PC-9 (cell line): ENCODE measurements at regions of chr9 and their contacts with region 1.

Region 1: GRCh38 chr9:72577212-72577753 is 55.9 kb downstream of the TMC1 start:
- DNase-seq: peak; percentile 59 to 95
- H3K4me3 ChIP-seq: peak overlapping the region; percentile 43; the same call in 1 of the 2 replicates
- H3K27ac ChIP-seq: peak overlapping the region; percentile 95
- H3K4me1 ChIP-seq: peaks cover 89% of the 10 kb centered on the region
- H3K27me3 ChIP-seq: no peaks in the 10 kb centered on the region
- CTCF ChIP-seq: no peak

Region 2: GRCh38 chr9:72292256-72292682 is 285.0 kb before region 1 on chr9:
- CTCF ChIA-PET with region 1: no interaction called
- POLR2A ChIA-PET with region 1: interaction called, 5 read pairs
- intact Hi-C with region 1: loop called (anchors 5 kb)
- DNase-seq: no peak
- H3K4me3 ChIP-seq: no peak overlapping the region
- H3K27ac ChIP-seq: no peak overlapping the region
- H3K4me1 ChIP-seq: peaks cover 26% of the 10 kb centered on the region
- H3K27me3 ChIP-seq: no peaks in the 10 kb centered on the region
- CTCF ChIP-seq: peak; percentile 71

Region 3: DNA sequence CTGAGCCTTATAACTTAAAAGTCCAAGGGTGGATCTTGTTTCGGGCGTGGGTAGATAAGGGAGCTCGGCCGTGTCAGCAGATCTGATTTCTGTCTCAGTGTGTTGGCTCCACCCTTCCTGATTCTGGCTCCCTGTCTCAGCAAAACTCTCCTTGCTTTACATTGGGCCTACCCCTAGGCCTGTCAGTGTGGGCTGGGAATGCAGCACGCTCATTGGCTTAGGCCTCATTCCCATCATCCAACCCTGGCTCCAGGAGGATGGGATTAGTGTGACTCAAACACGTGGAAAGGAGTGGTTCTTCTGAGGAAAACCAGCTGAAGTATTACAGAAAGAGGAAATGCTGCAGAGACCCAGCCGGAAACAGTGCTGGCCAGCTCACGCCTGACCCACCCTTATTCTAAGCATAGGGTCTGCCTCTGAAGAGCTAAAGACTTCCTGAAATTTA is 272.2 kb before region 1 on chr9:
- CTCF ChIA-PET with region 1: no interaction called
- POLR2A ChIA-PET with region 1: interaction called, 16 read pairs
- intact Hi-C with region 1: no loop called
- DNase-seq: peak; percentile 88 to 91
- H3K4me3 ChIP-seq: peak overlapping the region; percentile 25; the same call in 1 of the 2 replicates
- H3K27ac ChIP-seq: no peak overlapping the region
- H3K4me1 ChIP-seq: no peaks in the 10 kb centered on the region
- H3K27me3 ChIP-seq: no peaks in the 10 kb centered on the region
- CTCF ChIP-seq: no peak

Region 4: GRCh38 chr9:72473474-72474261 is 103.6 kb before region 1 on chr9:
- CTCF ChIA-PET with region 1: no interaction called
- POLR2A ChIA-PET with region 1: interaction called, 4 read pairs
- intact Hi-C with region 1: loop called (anchors 5 kb)
- DNase-seq: no peak
- H3K4me3 ChIP-seq: no peak overlapping the region
- H3K27ac ChIP-seq: no peak overlapping the region
- H3K4me1 ChIP-seq: peaks cover 31% of the 10 kb centered on the region
- H3K27me3 ChIP-seq: no peaks in the 10 kb centered on the region
- CTCF ChIP-seq: no peak

Region 5: DNA sequence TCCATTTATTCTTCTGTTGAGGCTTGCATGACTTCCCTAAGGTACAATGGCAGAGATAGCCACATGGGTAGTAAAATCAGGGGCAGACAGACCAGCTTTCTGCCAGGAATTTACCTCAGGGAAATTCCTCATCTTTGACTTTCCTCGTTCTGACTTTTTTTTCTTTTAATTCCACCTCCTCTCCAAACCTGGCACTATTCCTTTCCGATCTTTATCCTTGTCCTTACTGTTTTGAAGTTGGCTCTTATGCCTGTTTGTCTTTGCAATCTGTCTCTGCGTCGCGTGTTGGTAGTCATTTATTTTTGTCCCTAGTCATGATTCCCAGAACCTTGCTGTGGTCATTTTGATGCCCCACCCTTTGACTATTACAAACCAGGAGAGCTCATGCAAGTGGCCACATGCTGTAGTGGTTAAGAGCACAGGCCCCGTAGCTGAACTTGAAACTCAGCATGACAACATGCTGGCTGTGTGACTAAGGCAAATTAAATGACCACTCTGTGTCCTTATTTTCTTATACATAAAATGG is 36.9 kb before region 1 on chr9:
- CTCF ChIA-PET with region 1: interaction called, 18 read pairs
- POLR2A ChIA-PET with region 1: interaction called, 20 read pairs
- intact Hi-C with region 1: loop called (anchors 2 kb)
- DNase-seq: peak; percentile 43 to 60
- H3K4me3 ChIP-seq: no peak overlapping the region
- H3K27ac ChIP-seq: peak overlapping the region; percentile 42
- H3K4me1 ChIP-seq: peaks cover 54% of the 10 kb centered on the region
- H3K27me3 ChIP-seq: no peaks in the 10 kb centered on the region
- CTCF ChIP-seq: no peak